IMR-90 (cell line): ENCODE measurements at regions of chr1 and their contacts with region 1.

Region 1: GRCh38 chr1:180997843-180998504 is 24.7 kb downstream of the STX6 start:
- DNase-seq: no peak
- ATAC-seq: peak; percentile 49
- H3K4me3 ChIP-seq: no peak overlapping the region
- H3K27ac ChIP-seq: peak overlapping the region; percentile 50; the same call in 1 of the 2 replicates
- H3K4me1 ChIP-seq: peaks cover 8% of the 10 kb centered on the region
- H3K27me3 ChIP-seq: no peaks in the 10 kb centered on the region
- CTCF ChIP-seq: no peak
- POLR2A ChIP-seq: no peak
- RAD21 ChIP-seq: no peak

Region 2: DNA sequence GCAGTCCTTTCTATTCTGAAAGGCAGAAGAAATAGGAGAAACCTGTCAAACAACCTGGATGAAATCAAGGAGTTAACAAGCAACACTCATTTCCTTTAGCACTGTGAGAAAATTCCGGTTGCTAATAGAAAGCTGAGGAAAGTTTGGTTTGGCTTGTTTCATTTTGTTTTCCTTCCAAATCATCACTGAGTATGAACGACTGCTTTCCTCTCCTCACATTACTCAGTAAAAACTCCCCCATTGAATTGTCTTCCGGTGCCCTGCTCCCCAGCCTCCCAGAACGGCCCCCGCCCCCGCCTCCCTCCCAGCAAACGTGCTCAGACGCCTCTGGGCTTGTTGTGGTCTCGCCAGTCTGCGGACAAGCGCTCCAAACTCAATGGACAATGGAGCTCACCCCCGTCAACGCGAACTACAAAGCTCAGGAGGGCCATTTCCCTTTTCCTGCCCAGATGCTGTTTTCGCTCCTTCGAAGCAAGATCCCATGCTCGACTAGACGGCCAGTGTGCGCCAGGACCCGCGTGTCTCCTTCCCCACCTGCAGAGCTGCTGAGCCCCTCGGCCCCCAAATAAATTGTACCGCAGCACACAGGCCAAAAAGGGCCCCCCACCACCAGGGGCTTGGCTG is 23.9 kb after region 1 on chr1:
- CTCF ChIA-PET with region 1: interaction called, 3 read pairs
- POLR2A ChIA-PET with region 1: interaction called, 10 read pairs
- dilution Hi-C with region 1: no loop called
- in situ Hi-C with region 1: no loop called
- intact Hi-C with region 1: no loop called
- DNase-seq: peak; percentile 73
- ATAC-seq: peak; percentile 49
- H3K4me3 ChIP-seq: peak overlapping the region; percentile 93
- H3K27ac ChIP-seq: peak overlapping the region; percentile 78
- H3K4me1 ChIP-seq: no peaks in the 10 kb centered on the region
- H3K27me3 ChIP-seq: no peaks in the 10 kb centered on the region
- CTCF ChIP-seq: no peak
- POLR2A ChIP-seq: no peak
- RAD21 ChIP-seq: no peak

Region 3: GRCh38 chr1:181872562-181873144 is 874.7 kb after region 1 on chr1:
- CTCF ChIA-PET with region 1: no interaction called
- POLR2A ChIA-PET with region 1: no interaction called
- dilution Hi-C with region 1: no loop called
- in situ Hi-C with region 1: no loop called
- intact Hi-C with region 1: no loop called
- DNase-seq: no peak
- ATAC-seq: no peak
- H3K4me3 ChIP-seq: no peak overlapping the region
- H3K27ac ChIP-seq: no peak overlapping the region
- H3K4me1 ChIP-seq: no peaks in the 10 kb centered on the region
- H3K27me3 ChIP-seq: no peaks in the 10 kb centered on the region
- CTCF ChIP-seq: no peak
- POLR2A ChIP-seq: no peak
- RAD21 ChIP-seq: no peak